A549 (cell line): ENCODE measurements at regions of chr7 and their contacts with region 1.

Region 1: DNA sequence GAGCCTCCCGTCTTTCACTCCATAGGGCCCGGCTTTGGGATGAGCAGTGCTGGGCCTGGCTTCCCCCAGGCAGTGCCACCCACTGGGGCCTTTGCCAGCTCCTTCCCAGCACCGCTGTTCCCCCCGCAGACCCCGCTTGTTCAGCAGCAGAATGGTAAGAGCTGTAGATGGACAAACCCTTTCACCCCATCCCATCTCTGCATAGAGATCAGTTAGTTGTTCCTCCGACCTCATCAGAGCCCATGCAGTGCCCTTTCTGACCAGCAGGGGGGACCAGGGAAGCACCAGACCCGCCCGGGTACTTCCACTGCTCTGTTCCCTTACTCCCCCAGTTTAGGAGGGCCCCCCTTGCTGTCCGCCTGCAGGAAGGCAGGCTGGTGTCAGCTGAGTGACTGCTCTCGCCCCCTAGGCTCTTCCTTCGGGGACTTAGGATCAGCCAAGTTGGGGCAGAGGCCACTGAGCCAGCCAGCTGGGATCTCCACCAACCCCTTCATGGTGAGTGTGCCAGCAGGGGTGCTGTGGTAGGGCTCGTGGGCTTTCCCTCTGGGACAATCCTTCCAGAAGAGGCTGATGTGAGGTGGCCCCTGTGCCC is 9.8 kb downstream of the SAP25 start:
- DNase-seq: peak; percentile 61 to 84
- ATAC-seq: peak; percentile 48 to 79; a peak in 4 of 6 replicates
- H3K4me3 ChIP-seq: no peak overlapping the region
- H3K27ac ChIP-seq: 0 out of 6 replicates have a peak overlapping the region, but pooled peaks of 1 of the 2 experiments have one; percentile 27
- H3K4me1 ChIP-seq: peaks cover 6% of the 10 kb centered on the region; the same call in 2 of the 3 replicates
- CTCF ChIP-seq: peak; percentile 72
- EP300 ChIP-seq: no peak
- POLR2A ChIP-seq: no peak
- RAD21 ChIP-seq: peak; percentile 55 to 68

Region 2: DNA sequence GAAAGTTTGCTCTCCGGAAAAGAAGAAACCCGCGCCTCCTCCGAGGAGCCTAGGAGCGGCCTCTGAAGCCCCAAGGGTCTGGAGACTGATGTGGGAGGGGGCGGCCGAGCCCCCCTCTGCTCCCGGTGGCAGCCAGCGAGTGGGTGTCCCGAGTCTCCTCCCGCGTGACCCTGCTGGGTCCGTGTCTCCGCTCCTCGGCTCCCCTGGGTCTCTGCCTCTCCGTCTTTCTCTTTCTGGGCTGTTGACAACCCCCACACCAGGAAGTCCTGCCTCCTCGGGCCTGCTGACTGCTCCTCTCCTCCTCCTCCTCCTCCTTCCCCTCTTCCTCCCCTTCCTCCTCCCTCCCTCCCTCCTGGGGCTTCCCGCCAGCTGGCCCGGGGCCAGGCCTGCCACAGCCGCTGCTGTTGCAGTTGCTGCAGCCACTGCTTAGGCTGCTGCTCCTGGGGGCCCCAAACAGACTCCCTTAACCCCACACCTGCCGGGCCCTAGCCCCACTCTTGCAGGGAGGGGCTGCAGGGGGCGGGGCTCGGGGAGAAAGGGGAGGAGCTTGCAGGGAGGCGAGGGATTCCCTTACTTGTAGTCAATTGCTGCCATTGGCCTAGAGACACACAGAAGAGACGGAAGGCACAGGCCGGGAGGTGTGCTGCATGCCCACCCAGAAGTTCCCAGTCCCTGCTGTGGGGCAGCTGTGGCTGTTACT is 84.8 kb before region 1 on chr7 and contains the start of gene TSC22D4:
- CTCF ChIA-PET with region 1: interaction called, 44 read pairs
- POLR2A ChIA-PET with region 1: no interaction called
- DNase-seq: peak; percentile 90 to 91
- ATAC-seq: peak; percentile 70 to 85
- H3K4me3 ChIP-seq: peak within 1 kb of the TSS; percentile 75
- H3K27ac ChIP-seq: peak within 1 kb of the TSS; percentile 87 to 96
- H3K4me1 ChIP-seq: peaks cover 34% of the 10 kb centered on the region
- CTCF ChIP-seq: no peak
- EP300 ChIP-seq: no peak
- POLR2A ChIP-seq: peak; percentile 67
- RAD21 ChIP-seq: no peak
- polyA plus RNA-seq, gene TSC22D4: 6.2 and 7.9 TPM in 2 replicates

Region 3: GRCh38 chr7:100516135-100516812 is 47.6 kb before region 1 on chr7:
- CTCF ChIA-PET with region 1: interaction called, 16 read pairs
- POLR2A ChIA-PET with region 1: no interaction called
- DNase-seq: peak in 1 of 2 experiments; percentile 14
- ATAC-seq: peak in 1 of 2 experiments; percentile 51; a peak in 3 of 6 replicates
- H3K4me3 ChIP-seq: no peak overlapping the region
- H3K27ac ChIP-seq: peak overlapping the region in 1 of 2 experiments; percentile 46; a peak in 3 of 6 replicates
- H3K4me1 ChIP-seq: peaks cover 8% of the 10 kb centered on the region
- CTCF ChIP-seq: no peak
- EP300 ChIP-seq: no peak
- POLR2A ChIP-seq: no peak
- RAD21 ChIP-seq: no peak

Region 4: DNA sequence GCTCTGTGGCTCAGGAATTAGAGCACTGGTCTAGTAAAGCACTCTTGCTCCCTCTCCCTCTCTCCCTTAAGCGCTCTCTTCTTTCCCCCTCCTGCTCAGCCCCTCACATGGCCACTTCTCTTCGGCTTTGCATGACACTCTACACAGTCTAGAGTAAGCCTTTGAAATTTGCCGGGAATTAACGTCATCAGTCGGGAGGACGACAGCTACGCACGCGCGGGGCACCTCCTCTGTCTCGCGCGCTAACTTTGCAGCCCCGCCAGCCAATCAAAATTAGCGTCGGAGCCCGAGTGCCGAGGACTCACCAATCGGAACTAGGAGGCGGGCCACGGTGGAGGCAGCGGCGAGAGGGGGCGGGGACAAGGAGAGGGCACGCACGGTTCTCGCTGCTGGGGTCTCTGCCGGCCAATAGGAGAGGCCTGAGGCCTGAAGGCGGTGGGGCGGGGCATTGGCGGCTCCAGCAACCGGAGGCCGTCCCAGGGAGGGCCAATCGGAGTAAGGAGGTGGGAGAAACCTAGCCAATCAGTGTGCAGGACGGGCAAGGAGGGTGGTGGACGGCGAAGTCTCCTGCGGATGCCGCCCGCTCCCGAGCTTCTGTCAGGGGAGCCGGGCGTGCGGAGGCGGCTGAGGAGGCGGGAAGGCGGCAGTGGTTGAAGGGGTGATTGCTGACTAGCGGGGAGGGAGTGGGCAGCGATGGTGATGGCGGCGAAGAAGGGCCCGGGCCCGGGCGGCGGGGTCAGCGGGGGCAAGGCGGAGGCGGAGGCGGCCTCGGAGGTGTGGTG is 25.1 kb before region 1 on chr7 and contains the start of gene AGFG2:
- CTCF ChIA-PET with region 1: interaction called, 316 read pairs
- POLR2A ChIA-PET with region 1: no interaction called
- DNase-seq: peak; percentile 99 to 100
- ATAC-seq: peak; percentile 97 to 99
- H3K4me3 ChIP-seq: peak within 1 kb of the TSS; percentile 68
- H3K27ac ChIP-seq: peak within 1 kb of the TSS; percentile 71 to 88
- H3K4me1 ChIP-seq: peaks cover 38% of the 10 kb centered on the region
- CTCF ChIP-seq: no peak
- EP300 ChIP-seq: no peak
- POLR2A ChIP-seq: peak; percentile 62
- RAD21 ChIP-seq: no peak; a peak in 1 of 5 replicates
- polyA plus RNA-seq, gene AGFG2: 13.5 and 16.0 TPM in 2 replicates

Region 5: DNA sequence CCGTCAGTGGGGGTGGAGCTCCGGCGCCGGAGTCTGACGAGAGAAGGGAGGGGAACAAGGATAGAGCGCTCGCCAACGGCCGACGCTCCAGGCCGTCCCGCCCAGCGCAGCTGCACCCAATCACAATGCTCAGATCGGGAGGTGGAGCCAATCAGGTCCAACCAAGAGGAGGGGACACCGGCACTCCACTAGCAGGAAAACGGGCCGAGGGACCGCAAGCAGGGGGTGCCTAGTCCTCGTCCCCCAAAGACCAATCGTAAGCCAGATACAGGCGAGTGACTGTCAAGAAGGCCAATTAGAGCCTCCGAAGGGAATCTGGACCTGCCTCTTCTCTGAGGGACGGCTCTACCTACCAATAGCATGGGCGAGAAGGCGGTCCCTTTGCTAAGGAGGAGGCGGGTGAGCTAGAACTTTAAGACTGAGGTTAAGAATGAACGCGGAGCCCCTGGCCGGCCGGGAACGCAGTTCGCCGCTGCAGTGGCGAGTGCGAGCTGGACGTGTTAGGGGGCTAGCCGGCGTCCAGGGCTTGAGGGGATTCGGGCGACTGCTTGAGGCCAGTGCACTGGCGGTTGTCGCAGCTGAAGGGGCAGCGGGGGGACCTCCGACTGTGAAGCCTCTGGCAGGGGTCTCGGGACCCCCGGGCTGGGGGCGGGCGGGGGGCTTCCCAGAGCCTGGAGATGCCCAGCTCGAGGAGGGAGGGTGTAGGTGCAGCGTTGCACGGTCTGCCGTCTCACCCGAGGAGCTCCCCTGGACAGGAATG is 22.5 kb after region 1 on chr7 and contains the start of gene FBXO24:
- CTCF ChIA-PET with region 1: interaction called, 135 read pairs
- POLR2A ChIA-PET with region 1: interaction called, 12 read pairs
- DNase-seq: peak; percentile 100
- ATAC-seq: peak; percentile 88 to 95
- H3K4me3 ChIP-seq: peak within 1 kb of the TSS; percentile 99
- H3K27ac ChIP-seq: peak within 1 kb of the TSS; percentile 95 to 99
- H3K4me1 ChIP-seq: peaks cover 15% of the 10 kb centered on the region
- CTCF ChIP-seq: no peak
- EP300 ChIP-seq: no peak
- POLR2A ChIP-seq: peak; percentile 79
- RAD21 ChIP-seq: no peak
- polyA plus RNA-seq, gene FBXO24: 0.36 and 0.52 TPM in 2 replicates

Region 6: DNA sequence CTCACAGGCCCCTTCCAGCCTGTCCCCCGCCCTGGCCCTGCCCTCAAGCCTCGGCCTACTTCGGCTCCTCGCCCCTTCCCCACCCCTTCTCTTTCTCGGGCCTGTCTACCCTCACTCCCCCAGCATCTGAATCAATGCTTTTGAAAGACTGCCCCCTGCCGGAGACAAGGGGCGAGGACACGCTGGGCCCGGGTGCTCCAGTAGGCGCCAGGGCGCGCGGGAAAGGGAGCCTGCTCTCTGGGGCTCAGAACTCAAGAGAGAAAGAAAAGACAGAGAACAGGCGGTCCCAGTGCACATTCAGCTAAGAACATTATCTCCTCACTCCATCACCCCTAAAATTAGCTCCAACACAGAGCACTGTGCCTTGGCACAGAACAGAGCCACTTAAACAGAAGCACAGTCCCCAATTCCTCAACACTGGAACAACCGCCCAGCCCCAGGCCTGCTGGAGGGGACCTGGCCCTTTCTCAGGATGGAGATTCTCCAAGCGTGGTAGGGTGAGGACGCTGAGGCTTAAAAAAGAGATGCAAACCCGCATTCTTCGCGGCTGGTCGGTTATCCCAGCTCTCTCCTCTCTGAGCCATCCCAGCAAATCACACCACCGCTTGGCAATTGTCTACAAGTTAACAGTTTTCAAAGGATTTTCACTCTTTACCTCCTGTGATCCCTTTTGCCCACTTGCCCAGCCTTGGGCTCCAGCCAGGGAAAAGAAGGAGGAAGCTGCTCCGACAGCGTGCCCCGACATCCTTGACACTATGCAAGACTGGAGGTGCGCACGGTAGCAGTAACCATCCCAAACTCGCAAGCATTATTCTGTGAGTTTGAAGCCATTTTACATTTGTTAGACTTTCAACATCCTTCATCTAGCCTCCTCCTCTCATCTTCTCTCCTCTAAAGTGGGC is 128.0 kb after region 1 on chr7:
- CTCF ChIA-PET with region 1: interaction called, 27 read pairs
- POLR2A ChIA-PET with region 1: no interaction called
- DNase-seq: peak; percentile 74 to 93
- ATAC-seq: peak; percentile 72 to 94; a peak in 5 of 6 replicates
- H3K4me3 ChIP-seq: no peak overlapping the region
- H3K27ac ChIP-seq: no peak overlapping the region
- H3K4me1 ChIP-seq: peaks cover 26% of the 10 kb centered on the region
- CTCF ChIP-seq: peak; percentile 87
- EP300 ChIP-seq: no peak
- POLR2A ChIP-seq: no peak
- RAD21 ChIP-seq: peak; percentile 75 to 78